ENCODE measurements at regions of chr20 and their contacts with region 1.

Region 1: DNA sequence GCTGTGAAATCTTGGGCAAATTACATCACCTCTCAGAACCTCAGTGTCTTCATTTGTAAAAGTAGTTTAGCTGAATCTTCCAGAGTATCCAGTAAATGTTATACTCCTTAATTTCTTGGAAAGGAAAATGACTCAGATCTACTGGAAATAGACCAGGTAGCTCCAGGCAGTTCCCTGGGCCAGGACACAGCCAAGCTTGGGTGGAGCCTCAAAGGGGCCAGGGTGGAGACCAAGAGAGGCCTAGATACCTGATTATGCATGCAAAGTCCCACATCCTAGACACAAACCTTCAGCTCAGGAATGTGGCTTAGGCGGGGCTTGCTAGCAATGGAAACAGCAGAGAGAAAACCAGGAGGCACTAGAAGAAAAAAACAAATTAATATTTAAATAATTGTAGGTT is 272.8 kb downstream of the MAFB start:
- DNase-seq: peak; percentile 88
- H3K4me3 Mint-ChIP-seq: no peak overlapping the region
- H3K27ac Mint-ChIP-seq: peak overlapping the region; percentile 3
- H3K4me1 Mint-ChIP-seq: peaks cover 18% of the 10 kb centered on the region
- H3K27me3 Mint-ChIP-seq: no peaks in the 10 kb centered on the region
- CTCF ChIP-seq: no peak

Region 2: GRCh38 chr20:40286975-40287531 is 129.2 kb before region 1 on chr20:
- CTCF ChIA-PET with region 1: no interaction called
- POLR2A ChIA-PET with region 1: interaction called, 14 read pairs
- intact Hi-C with region 1: no loop called
- DNase-seq: peak; percentile 98
- H3K4me3 Mint-ChIP-seq: peak overlapping the region; percentile 40
- H3K27ac Mint-ChIP-seq: peak overlapping the region; percentile 92
- H3K4me1 Mint-ChIP-seq: peaks cover 36% of the 10 kb centered on the region
- H3K27me3 Mint-ChIP-seq: no peaks in the 10 kb centered on the region
- CTCF ChIP-seq: no peak

Region 3: DNA sequence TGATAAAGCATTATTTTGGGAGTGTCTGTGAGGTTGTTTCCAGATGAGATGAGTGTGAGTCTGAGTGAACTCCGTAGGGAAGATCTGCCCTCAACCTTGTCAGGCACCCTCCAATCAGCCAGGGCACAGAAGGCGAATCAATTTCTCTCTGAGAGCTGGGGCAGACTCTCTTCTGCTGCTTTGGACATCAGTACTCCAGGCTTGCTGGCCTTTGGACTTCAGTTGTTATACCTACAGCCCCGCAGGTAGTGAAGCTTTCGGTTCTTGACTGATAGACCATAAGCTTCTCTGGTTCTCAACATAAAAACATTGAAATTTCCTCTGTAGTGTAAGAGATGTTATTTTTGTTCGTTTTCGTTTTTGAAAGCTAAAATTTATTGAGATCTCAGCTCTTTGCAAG is 201.3 kb after region 1 on chr20:
- CTCF ChIA-PET with region 1: no interaction called
- POLR2A ChIA-PET with region 1: no interaction called
- intact Hi-C with region 1: no loop called
- DNase-seq: no peak
- H3K4me3 Mint-ChIP-seq: no peak overlapping the region
- H3K27ac Mint-ChIP-seq: no peak overlapping the region
- H3K4me1 Mint-ChIP-seq: no peaks in the 10 kb centered on the region
- H3K27me3 Mint-ChIP-seq: no peaks in the 10 kb centered on the region
- CTCF ChIP-seq: no peak

Measured in MCF 10A (cell line).